ENCODE measurements at regions of chr19 and their contacts with region 1.

Region 1: DNA sequence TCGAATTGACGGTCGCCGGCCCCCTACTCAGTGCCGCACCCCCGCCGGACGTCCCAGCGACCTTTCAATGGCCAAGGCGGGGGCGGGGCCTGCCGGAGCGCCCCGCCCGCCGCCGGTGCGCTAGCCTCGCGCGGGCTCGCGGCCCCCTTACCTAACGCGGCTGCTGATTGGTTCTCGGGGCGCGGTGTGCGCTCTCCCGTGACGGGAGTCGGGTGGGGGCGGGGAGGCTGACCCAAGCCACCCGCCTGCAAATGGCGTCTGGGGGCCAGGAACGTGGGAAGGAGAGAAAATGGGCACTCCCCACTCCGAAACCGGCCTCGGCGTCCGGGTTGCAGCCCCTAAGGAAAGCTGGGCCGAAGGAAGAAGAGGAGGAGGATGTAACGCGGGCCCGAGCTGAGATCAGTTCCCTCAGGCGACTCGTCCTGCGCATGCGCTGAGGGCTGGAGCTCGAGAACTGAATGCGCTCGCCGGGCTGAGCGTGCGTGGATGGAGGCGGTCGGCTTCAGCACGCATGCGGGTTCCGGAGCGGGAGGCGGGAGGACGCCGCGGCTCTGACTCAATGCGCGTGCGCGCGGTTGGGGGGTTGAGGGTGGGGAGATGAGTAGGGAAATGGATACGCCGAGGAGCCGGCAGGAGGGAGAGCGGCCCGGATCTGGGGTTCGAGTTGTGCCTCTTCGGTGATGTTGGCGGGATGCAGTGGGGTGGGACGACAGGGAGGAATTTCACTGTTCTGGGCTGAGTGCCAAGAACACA is at the start of gene SMG9:
- DNase-seq: peak; percentile 98
- H3K4me3 Mint-ChIP-seq: peak within 1 kb of the TSS; percentile 99
- H3K27ac Mint-ChIP-seq: peak within 1 kb of the TSS; percentile 100
- H3K4me1 Mint-ChIP-seq: peaks cover 64% of the 10 kb centered on the region
- H3K27me3 Mint-ChIP-seq: no peaks in the 10 kb centered on the region
- total RNA-seq, gene SMG9: 103 to 111 TPM

Region 2: DNA sequence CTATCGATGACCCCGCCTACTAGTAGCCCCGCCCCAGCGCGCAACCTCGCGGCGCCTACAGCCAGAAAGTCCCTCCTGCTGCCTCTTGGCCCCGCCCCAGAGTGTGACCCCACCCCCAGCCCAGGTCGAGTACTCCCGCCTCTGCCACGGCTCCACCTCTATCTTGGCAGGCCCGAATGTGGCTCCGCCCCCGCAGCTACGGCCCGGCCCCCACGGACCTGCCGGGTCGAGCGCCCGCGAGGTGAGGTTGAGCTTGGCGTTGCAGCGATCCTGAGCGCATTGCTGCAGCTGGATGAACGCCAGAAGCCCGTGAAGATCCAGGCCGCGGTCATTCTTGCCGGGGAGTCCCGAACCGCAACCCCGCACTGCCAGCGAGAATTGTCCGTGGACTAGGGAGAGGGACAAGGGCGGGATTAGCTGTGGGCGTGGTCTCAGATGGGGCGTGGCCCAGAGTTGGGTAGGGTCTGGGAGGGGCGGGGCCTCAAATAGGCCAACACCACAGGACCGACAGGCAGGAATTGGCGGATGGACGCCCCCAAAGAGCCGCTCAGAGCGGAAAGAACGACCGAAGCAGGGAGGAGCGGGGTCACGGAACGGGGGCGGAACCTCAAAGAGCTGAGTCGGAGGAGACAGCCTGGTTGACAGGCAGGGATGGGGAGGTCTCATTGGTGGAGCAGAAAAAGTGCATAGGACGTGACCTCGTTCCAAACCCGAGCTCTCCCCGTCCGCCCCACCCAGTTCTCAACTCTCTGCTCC is 291.1 kb before region 1 on chr19:
- CTCF ChIA-PET with region 1: no interaction called
- intact Hi-C with region 1: loop called (anchors 1 kb)
- DNase-seq: peak; percentile 100
- H3K4me3 Mint-ChIP-seq: peak overlapping the region; percentile 94
- H3K27ac Mint-ChIP-seq: peak overlapping the region; percentile 86
- H3K4me1 Mint-ChIP-seq: peaks cover 37% of the 10 kb centered on the region
- H3K27me3 Mint-ChIP-seq: no peaks in the 10 kb centered on the region

Region 3: DNA sequence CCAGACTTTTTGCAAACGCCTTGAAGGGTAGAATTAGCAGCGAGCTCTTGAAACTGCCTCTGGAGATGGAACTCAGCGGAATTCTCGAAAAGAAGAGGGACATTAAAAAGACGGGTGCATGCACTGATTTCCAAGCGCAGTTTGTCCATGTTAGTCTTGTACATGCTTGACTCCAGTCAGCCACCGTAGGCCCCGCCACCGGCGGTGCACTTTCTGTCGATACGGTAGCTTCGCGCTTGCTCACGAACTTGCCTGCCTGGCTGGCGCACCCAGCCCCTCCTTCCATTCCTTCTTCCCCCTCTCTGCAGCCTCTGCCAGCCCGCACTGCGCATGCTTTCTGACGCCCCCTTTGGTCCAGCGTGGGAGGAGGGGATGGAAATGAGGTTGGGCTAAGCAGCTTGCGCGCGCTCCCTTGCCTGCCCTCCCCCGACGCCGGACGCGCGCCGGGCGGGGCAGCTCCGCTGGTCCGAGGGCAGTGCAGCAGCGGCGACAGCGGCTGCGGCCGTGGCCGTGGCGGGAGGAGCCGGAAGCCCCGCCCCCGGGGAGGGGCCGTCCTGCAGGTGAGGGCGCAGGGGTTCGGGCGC is 221.6 kb before region 1 on chr19 and contains the start of gene ZNF575:
- CTCF ChIA-PET with region 1: no interaction called
- intact Hi-C with region 1: loop called (anchors 1 kb)
- DNase-seq: peak; percentile 92
- H3K4me3 Mint-ChIP-seq: peak within 1 kb of the TSS; percentile 80
- H3K27ac Mint-ChIP-seq: peak within 1 kb of the TSS; percentile 88
- H3K4me1 Mint-ChIP-seq: peaks cover 19% of the 10 kb centered on the region
- H3K27me3 Mint-ChIP-seq: no peaks in the 10 kb centered on the region
- total RNA-seq, gene ZNF575: 3.1 to 5.2 TPM

Region 4: GRCh38 chr19:43700395-43701000 is 54.2 kb before region 1 on chr19:
- CTCF ChIA-PET with region 1: no interaction called
- intact Hi-C with region 1: loop called (anchors 1 kb)
- DNase-seq: peak; percentile 42
- H3K4me3 Mint-ChIP-seq: peak overlapping the region; percentile 61
- H3K27ac Mint-ChIP-seq: peak overlapping the region; percentile 91
- H3K4me1 Mint-ChIP-seq: peaks cover 26% of the 10 kb centered on the region
- H3K27me3 Mint-ChIP-seq: peaks cover 10% of the 10 kb centered on the region

Region 5: DNA sequence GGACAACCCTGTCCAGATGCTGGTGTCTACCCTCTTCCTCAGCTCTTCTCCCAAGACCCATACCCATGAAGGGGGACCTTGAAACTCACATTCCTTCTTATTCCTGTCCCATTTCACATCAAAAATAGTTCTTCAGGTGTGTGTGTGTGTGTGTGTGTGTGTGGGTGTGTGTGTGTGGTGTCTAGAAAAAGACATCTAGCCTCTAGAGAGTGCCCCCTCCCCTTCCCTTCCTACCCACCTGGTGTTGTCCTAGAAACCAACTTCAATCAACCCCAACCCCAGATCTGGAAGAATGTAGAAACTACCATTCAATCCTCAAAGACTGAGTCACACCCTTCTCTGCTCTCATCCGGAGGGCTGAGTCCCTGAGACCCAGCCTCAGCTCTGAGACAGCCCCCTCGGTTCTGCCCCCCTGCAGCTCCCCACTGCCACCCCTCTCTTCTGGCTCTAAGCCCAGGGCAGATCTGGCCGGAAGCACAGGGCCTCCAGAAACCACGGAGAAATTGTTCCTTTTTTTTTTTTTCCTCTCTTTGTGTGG is 22.6 kb after region 1 on chr19:
- CTCF ChIA-PET with region 1: interaction called, 17 read pairs
- intact Hi-C with region 1: loop called (anchors 1 kb)
- DNase-seq: peak; percentile 64
- H3K4me3 Mint-ChIP-seq: peak overlapping the region; percentile 76
- H3K27ac Mint-ChIP-seq: peak overlapping the region; percentile 94
- H3K4me1 Mint-ChIP-seq: peaks cover 61% of the 10 kb centered on the region
- H3K27me3 Mint-ChIP-seq: no peaks in the 10 kb centered on the region

Region 6: GRCh38 chr19:44746946-44747738 is 992.5 kb after region 1 on chr19:
- CTCF ChIA-PET with region 1: no interaction called
- intact Hi-C with region 1: loop called (anchors 2 kb)
- DNase-seq: peak; percentile 97
- H3K4me3 Mint-ChIP-seq: peak overlapping the region; percentile 87
- H3K27ac Mint-ChIP-seq: peak overlapping the region; percentile 95
- H3K4me1 Mint-ChIP-seq: peaks cover 56% of the 10 kb centered on the region
- H3K27me3 Mint-ChIP-seq: no peaks in the 10 kb centered on the region